Common myeloid progenitor, CD34-positive (primary cell): ENCODE measurements at regions of chr12 and their contacts with region 1.

Region 1: GRCh38 chr12:4276524-4277204 is 3.1 kb downstream of the CCND2 start:
- DNase-seq: peak; percentile 92 to 95 (median 94)
- H3K4me3 ChIP-seq: peak overlapping the region in 3 of 7 experiments; percentile 92 to 98 (median 94)
- H3K27ac ChIP-seq: no peak overlapping the region
- H3K4me1 ChIP-seq: peaks cover 6 to 66% (median 48%) of the 10 kb centered on the region in 4 experiments
- H3K27me3 ChIP-seq: no peaks in the 10 kb centered on the region

Region 2: DNA sequence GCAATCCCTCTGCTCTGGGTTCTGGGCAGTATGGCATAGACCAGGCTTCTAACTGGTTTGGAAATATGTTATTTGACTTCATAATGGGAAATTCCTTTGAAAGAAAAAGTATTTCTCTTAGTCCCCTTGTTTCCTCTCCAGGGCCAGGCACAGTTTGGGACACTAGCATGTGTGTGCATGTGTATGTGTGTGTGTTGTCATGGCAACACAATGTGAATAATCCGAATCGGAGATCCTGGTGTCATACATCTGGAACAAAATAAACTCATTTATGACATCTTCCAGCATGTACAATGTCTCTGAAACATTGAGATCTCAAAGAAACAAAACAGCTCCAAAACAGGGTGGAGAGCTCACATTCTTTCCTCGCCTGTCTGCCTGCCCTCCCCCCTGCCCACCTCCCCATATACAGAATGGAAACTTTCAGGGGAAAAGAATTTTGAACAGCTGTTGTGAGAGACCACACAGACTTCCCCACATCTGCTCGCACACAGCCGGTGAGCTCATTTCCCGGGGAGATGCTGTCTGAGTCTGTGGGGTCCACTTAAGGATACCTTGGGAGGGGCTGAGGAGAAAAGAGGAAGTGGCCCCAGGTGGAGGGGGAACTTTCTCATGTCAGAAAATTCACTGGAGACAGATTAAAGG is 348.0 kb before region 1 on chr12:
- CTCF ChIA-PET with region 1: interaction called, 11 read pairs
- POLR2A ChIA-PET with region 1: no interaction called
- DNase-seq: peak; percentile 90 to 99 (median 98)
- H3K4me3 ChIP-seq: peak overlapping the region in 3 of 7 experiments; percentile 16 to 38 (median 37)
- H3K27ac ChIP-seq: peak overlapping the region; percentile 78 to 86
- H3K4me1 ChIP-seq: peaks cover 20 to 64% (median 60%) of the 10 kb centered on the region in 4 experiments
- H3K27me3 ChIP-seq: no peaks in the 10 kb centered on the region

Region 3: GRCh38 chr12:3988519-3989448 is 287.9 kb before region 1 on chr12:
- CTCF ChIA-PET with region 1: interaction called, 44 read pairs
- POLR2A ChIA-PET with region 1: interaction called, 4 read pairs
- DNase-seq: peak; percentile 36 to 87 (median 82)
- H3K4me3 ChIP-seq: peak overlapping the region in 2 of 7 experiments; percentile 37 to 47
- H3K27ac ChIP-seq: peak overlapping the region in 1 of 2 experiments; percentile 29
- H3K4me1 ChIP-seq: peaks cover 3 to 13% (median 6%) of the 10 kb centered on the region in 4 experiments
- H3K27me3 ChIP-seq: no peaks in the 10 kb centered on the region

Region 4: DNA sequence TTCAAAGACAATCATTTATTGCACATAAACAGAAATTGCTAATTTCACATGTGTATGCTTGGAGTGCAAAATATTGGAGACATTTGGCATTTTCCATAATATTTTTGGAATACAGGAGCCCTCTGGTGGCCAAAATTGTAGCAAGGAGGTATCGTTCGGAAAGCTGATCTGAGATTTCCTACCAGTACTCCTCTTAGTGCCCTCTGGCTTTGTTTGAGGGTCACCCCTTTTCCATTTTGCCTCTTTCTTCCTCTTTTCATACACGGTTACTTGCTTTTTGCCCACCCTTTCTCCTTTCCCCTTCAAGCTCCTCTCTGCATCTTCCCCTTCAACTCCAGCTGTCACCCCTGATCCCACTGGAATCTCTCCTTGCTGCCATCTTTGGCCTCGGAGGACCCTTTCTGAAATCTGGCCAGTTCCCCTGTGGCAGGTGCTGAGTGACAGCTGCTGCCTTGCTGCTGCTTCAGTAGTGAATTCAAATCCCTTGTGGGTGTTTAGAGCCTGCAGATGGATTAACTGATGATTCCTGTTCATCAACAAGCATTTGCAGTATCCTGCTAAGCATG is 238.8 kb before region 1 on chr12:
- CTCF ChIA-PET with region 1: interaction called, 49 read pairs
- POLR2A ChIA-PET with region 1: no interaction called
- DNase-seq: peak; percentile 28 to 49 (median 48)
- H3K4me3 ChIP-seq: no peak overlapping the region
- H3K27ac ChIP-seq: no peak overlapping the region
- H3K4me1 ChIP-seq: peaks cover 0 to 6% (median 0%) of the 10 kb centered on the region in 4 experiments
- H3K27me3 ChIP-seq: no peaks in the 10 kb centered on the region

Region 5: DNA sequence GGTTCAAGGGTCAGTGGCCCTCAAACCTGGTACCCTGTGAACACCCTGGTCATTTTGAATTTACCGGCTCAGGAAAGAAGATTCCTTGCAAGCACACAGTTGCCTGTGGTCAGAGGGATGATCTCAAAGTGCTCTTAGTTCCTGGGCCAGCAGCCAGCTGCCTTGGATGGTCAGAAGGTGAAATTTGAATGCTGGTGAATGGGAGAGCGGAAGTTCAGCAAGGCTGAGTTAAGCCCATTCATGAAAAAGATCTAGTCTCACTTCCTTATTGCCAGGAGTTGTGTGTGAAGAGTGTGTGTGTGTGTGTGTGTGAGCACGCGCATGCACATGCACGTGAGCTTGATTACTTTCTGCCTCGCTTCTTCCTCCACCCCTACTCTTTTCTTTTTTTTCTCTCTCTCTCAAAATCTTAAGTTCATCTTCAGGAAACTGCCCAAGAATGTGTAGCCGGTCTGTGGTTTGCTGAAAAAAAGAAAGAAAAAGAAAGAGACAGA is 158.6 kb before region 1 on chr12:
- CTCF ChIA-PET with region 1: interaction called, 98 read pairs
- POLR2A ChIA-PET with region 1: interaction called, 4 read pairs
- DNase-seq: peak; percentile 84 to 97 (median 94)
- H3K4me3 ChIP-seq: peak overlapping the region in 5 of 7 experiments; percentile 1 to 60 (median 30)
- H3K27ac ChIP-seq: peak overlapping the region in 1 of 2 experiments; percentile 11
- H3K4me1 ChIP-seq: peaks cover 23 to 73% (median 71%) of the 10 kb centered on the region in 4 experiments
- H3K27me3 ChIP-seq: no peaks in the 10 kb centered on the region

Region 6: DNA sequence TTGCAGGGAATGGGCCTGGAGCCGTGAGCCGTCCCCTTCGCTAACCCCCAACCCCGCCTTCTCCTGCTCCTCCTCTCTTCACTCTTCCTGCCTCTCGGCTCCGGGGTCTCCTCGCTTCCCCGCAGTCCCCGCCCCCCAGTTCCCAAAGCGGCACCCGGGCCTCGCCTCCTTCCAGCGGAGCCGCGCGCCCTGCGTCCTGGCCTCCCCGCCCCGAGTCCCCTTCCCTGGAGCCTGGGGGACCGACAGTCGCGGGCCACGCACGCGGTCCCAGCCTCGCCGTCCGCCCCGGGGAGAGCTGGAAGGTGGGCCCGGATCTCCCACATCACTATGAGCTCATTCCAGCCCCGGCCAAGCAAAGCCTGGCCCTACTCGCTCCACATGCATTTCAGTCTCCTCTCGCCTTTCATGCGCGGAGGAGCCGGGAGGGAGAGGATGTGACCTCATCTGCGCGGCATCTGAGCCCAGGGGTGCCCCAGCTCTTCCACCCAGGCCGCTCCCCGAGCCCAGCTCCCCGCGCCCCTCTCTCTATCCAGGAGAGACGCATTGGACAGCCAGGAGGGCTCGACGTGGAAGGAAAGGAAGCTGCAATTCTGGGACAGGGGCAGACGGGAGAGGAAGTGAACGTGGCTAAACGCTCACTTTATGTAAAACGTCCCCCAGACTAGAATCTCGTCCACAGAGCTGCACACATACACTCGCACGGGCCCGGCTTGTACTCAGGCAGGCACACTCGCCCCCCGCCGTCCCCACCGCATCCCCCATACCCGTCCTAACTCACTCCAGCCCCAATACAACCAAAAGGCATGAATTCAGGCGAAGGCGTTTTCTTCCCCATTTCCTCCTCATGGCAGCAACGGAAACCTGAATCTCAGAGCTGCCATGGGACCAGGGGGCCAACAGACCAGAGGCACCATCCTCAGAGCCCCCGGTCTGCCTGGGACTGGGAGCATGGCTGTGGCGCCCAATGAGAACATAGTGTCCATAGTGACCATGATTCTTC is 111.8 kb before region 1 on chr12:
- CTCF ChIA-PET with region 1: interaction called, 11 read pairs
- POLR2A ChIA-PET with region 1: interaction called, 7 read pairs
- DNase-seq: peak; percentile 67 to 82 (median 73)
- H3K4me3 ChIP-seq: peak overlapping the region; percentile 17 to 73 (median 53)
- H3K27ac ChIP-seq: peak overlapping the region; percentile 46 to 75
- H3K4me1 ChIP-seq: peaks cover 8 to 16% (median 14%) of the 10 kb centered on the region in 4 experiments
- H3K27me3 ChIP-seq: no peaks in the 10 kb centered on the region

Region 7: DNA sequence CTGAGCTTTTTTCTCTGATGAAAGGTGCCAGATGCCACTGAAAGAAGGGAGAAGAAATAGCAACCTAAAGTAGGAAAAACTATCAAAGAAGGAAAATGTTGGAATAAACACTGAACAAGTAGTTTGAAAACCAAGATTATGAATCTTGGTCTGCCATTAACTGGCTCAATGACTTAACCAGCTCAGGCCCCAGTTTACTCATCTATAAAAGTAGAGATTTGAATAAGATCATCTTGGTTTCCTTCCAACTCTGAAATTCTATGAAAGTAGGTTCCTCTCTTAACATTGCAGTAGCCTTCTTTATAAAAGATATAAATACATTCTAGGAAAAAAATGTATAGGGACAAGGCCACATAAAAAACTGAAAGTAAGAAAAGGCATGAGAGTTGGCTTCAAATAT is 19.2 kb before region 1 on chr12:
- CTCF ChIA-PET with region 1: no interaction called
- POLR2A ChIA-PET with region 1: no interaction called
- DNase-seq: no peak
- H3K4me3 ChIP-seq: no peak overlapping the region
- H3K27ac ChIP-seq: no peak overlapping the region
- H3K4me1 ChIP-seq: peaks cover 0 to 3% (median 0%) of the 10 kb centered on the region in 4 experiments
- H3K27me3 ChIP-seq: no peaks in the 10 kb centered on the region

Region 8: DNA sequence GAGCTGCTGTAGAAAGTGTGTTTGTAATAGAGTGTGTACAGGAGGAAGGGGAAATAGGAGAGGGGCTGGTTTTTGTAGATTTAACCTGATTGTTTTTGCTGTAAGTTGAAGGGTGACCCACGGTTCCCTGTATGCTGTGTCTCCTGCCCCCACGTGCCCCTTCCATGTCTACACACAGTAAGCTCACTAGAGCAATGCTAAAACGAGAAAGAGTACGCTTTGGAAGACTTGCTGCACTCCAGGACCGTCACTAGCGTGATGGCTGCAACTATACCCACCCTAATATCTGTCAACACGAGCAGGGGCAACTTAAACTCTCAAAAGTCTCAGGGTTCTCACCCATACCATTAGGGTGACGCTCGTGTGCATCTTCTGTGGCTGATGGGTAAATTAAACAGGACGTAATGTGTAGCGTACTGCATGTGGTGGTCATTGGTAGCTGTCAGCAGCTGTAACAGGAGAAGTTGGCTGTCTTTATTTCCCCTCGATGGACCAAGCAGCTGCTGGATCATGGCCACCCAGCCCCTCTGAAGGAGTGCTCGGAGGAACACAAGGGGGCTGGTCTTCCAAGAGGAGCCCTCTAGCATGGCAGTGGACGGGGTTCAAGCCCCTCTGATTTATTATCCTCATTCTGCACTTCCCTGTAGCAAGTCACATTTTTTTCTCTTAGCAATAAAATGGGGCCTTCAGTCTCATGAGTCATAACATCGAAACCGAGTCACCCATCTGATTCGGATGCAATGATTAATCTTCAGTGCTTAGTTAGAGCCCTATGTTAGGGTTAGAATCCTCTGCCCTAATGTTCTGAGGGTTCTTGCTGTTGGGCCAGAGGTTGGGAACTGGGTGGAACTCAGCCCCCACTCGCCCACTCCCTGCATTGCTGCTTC is 10.9 kb after region 1 on chr12:
- CTCF ChIA-PET with region 1: interaction called, 14 read pairs
- POLR2A ChIA-PET with region 1: interaction called, 3 read pairs
- DNase-seq: peak in 2 of 3 donors; percentile 46 to 60
- H3K4me3 ChIP-seq: no peak overlapping the region
- H3K27ac ChIP-seq: no peak overlapping the region
- H3K4me1 ChIP-seq: peaks cover 0 to 57% (median 52%) of the 10 kb centered on the region in 4 experiments
- H3K27me3 ChIP-seq: no peaks in the 10 kb centered on the region